ENCODE measurements at regions of chr1 and their contacts with region 1.

Region 1: GRCh38 chr1:204150702-204151551 is 917 bp downstream of the ETNK2 start:
- DNase-seq: no peak
- H3K4me3 ChIP-seq: peak overlapping the region; percentile 44 to 68 (median 57)
- H3K27ac ChIP-seq: no peak overlapping the region
- H3K4me1 ChIP-seq: peaks cover 18% of the 10 kb centered on the region
- H3K27me3 ChIP-seq: no peaks in the 10 kb centered on the region
- CTCF ChIP-seq: no peak

Region 2: GRCh38 chr1:204094856-204095644 is 55.9 kb before region 1 on chr1:
- CTCF ChIA-PET with region 1: no interaction called
- dilution Hi-C with region 1: loop called (anchors 5 kb)
- in situ Hi-C with region 1: no loop called
- intact Hi-C with region 1: no loop called
- DNase-seq: no peak
- H3K4me3 ChIP-seq: no peak overlapping the region
- H3K27ac ChIP-seq: no peak overlapping the region
- H3K4me1 ChIP-seq: no peaks in the 10 kb centered on the region
- H3K27me3 ChIP-seq: no peaks in the 10 kb centered on the region
- CTCF ChIP-seq: no peak

Measured in mammary epithelial cell (primary cell).